Panc1 (cell line): ENCODE measurements at regions of chr10 and their contacts with region 1.

Region 1: GRCh38 chr10:77165445-77166208 is 472.0 kb downstream of the KCNMA1 start:
- DNase-seq: peak; percentile 88
- ATAC-seq: peak; percentile 78
- H3K4me3 ChIP-seq: no peak overlapping the region
- H3K27ac ChIP-seq: peak overlapping the region; percentile 0; the same call in 1 of the 2 replicates
- H3K4me1 ChIP-seq: peaks cover 28% of the 10 kb centered on the region
- H3K27me3 ChIP-seq: no peaks in the 10 kb centered on the region
- CTCF ChIP-seq: no peak; the same call in 1 of the 2 replicates

Region 2: GRCh38 chr10:77251297-77252013 is 85.8 kb after region 1 on chr10:
- CTCF ChIA-PET with region 1: no interaction called
- POLR2A ChIA-PET with region 1: no interaction called
- in situ Hi-C with region 1: no loop called
- intact Hi-C with region 1: no loop called
- DNase-seq: no peak
- ATAC-seq: peak; percentile 75; the same call in 1 of the 2 replicates
- H3K4me3 ChIP-seq: no peak overlapping the region
- H3K27ac ChIP-seq: peak overlapping the region; percentile 3; the same call in 1 of the 2 replicates
- H3K4me1 ChIP-seq: no peaks in the 10 kb centered on the region
- H3K27me3 ChIP-seq: no peaks in the 10 kb centered on the region
- CTCF ChIP-seq: peak; percentile 82

Region 3: DNA sequence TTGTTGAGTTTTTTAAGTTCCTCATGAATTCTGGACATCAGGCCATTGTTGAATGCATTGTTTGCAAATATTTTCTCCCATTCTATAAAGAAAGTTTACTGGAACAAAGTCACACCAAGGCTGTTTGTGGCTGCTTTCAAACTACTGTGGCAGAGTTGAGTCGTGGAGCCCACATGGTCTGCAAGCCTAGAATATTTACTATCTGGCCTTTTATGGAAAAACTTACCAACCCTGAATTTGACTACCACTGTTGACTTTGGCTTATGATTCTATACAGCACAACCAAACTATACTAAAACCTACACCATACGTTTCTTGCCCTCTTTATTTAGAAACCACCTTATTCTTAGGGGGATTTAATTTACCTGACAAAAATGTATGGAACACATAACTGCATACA is 232.9 kb after region 1 on chr10:
- CTCF ChIA-PET with region 1: no interaction called
- POLR2A ChIA-PET with region 1: interaction called, 3 read pairs
- in situ Hi-C with region 1: no loop called
- intact Hi-C with region 1: loop called (anchors 5 kb)
- DNase-seq: no peak
- ATAC-seq: no peak
- H3K4me3 ChIP-seq: no peak overlapping the region
- H3K27ac ChIP-seq: no peak overlapping the region
- H3K4me1 ChIP-seq: peaks cover 29% of the 10 kb centered on the region
- H3K27me3 ChIP-seq: no peaks in the 10 kb centered on the region
- CTCF ChIP-seq: no peak

Region 4: GRCh38 chr10:77771450-77771849 is 605.8 kb after region 1 on chr10:
- CTCF ChIA-PET with region 1: interaction called, 10 read pairs
- POLR2A ChIA-PET with region 1: no interaction called
- in situ Hi-C with region 1: no loop called
- intact Hi-C with region 1: no loop called
- DNase-seq: no peak
- ATAC-seq: no peak
- H3K4me3 ChIP-seq: no peak overlapping the region
- H3K27ac ChIP-seq: no peak overlapping the region
- H3K4me1 ChIP-seq: no peaks in the 10 kb centered on the region
- H3K27me3 ChIP-seq: no peaks in the 10 kb centered on the region
- CTCF ChIP-seq: no peak